RWPE1 (cell line): ENCODE measurements at regions of chr9 and their contacts with region 1.

Region 1: GRCh38 chr9:101449140-101449721 is 13.7 kb upstream of the ALDOB start:
- DNase-seq: peak; percentile 82
- H3K27ac ChIP-seq: no peak overlapping the region
- CTCF ChIP-seq: peak; percentile 99

Region 2: GRCh38 chr9:101162231-101162630 is 287.0 kb before region 1 on chr9:
- CTCF ChIA-PET with region 1: no interaction called
- POLR2A ChIA-PET with region 1: no interaction called
- DNase-seq: no peak
- H3K27ac ChIP-seq: no peak overlapping the region
- CTCF ChIP-seq: no peak

Region 3: GRCh38 chr9:101438523-101438922 is 10.7 kb before region 1 on chr9:
- CTCF ChIA-PET with region 1: no interaction called
- POLR2A ChIA-PET with region 1: no interaction called
- DNase-seq: no peak
- H3K27ac ChIP-seq: no peak overlapping the region
- CTCF ChIP-seq: no peak

Region 4: DNA sequence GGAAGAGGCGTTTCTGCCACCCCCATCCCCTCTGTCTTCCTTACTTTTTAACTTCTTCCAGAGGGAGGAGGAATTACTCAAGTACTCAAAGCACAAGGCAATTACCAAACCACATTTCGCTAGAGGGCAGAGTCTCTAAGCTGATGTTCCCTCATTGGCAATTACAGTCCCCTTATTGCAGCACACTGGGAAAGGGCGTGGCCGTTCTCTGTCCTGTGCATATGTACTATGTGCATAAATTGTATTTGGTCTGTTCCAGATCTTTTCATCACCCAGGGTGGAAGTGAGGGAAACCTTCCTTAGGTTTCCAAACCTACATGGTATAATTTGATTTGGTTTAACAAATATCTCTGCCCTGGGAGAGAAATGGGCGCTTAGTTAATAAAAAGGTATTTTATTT is 16.2 kb after region 1 on chr9:
- CTCF ChIA-PET with region 1: interaction called, 16 read pairs
- POLR2A ChIA-PET with region 1: no interaction called
- DNase-seq: peak; percentile 84
- H3K27ac ChIP-seq: no peak overlapping the region
- CTCF ChIP-seq: peak; percentile 86